Activated naive CD4-positive, alpha-beta T cell treated with anti-CD3 and anti-CD28 coated beads for 36 hours (primary cell): ENCODE measurements at regions of chr14 and their contacts with region 1.

Region 1: GRCh38 chr14:61620130-61620946 is 75.0 kb upstream of the HIF1A start:
- DNase-seq: peak; percentile 85
- H3K4me3 Mint-ChIP-seq: no peak overlapping the region
- H3K27ac Mint-ChIP-seq: peak overlapping the region; percentile 89
- H3K4me1 Mint-ChIP-seq: peaks cover 80% of the 10 kb centered on the region
- H3K27me3 Mint-ChIP-seq: no peaks in the 10 kb centered on the region

Region 2: DNA sequence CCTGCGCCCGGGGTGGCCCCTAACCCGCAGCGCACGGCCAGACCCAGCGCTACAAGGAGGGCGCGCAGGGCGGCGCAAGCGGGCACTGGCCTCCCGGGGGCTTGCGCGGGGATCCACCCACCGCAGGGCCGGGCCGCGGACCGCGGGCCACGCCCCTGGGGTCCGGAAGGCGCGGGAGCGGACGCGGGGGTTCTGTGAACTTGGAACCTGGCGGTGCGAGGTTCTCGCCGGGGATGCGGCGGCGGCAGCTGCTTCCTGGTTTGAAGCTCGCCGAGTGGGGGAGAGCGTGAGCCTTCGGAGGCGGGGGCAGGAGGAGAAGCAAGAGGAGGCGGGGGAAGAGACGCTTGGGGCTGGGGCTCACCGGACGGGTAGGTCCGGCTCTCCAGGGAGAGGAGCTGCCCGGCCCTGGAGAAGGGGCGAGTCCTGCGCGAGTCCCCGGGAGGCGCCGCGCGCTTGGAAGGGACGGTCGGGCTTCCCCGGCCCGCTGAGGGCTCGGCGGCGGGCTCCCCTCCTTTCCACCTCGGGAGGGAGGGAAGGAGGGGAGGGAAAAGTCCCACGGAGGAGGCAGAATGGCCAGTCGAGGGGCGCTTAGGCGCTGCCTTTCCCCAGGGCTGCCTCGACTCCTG is 298.8 kb before region 1 on chr14 and contains the start of gene PRKCH:
- CTCF ChIA-PET with region 1: no interaction called
- intact Hi-C with region 1: loop called (anchors 5 kb)
- DNase-seq: peak; percentile 91
- H3K4me3 Mint-ChIP-seq: peak within 1 kb of the TSS; percentile 99
- H3K27ac Mint-ChIP-seq: peak within 1 kb of the TSS; percentile 95
- H3K4me1 Mint-ChIP-seq: peaks cover 25% of the 10 kb centered on the region
- H3K27me3 Mint-ChIP-seq: no peaks in the 10 kb centered on the region
- total RNA-seq, gene PRKCH: 149 to 158 TPM

Region 3: DNA sequence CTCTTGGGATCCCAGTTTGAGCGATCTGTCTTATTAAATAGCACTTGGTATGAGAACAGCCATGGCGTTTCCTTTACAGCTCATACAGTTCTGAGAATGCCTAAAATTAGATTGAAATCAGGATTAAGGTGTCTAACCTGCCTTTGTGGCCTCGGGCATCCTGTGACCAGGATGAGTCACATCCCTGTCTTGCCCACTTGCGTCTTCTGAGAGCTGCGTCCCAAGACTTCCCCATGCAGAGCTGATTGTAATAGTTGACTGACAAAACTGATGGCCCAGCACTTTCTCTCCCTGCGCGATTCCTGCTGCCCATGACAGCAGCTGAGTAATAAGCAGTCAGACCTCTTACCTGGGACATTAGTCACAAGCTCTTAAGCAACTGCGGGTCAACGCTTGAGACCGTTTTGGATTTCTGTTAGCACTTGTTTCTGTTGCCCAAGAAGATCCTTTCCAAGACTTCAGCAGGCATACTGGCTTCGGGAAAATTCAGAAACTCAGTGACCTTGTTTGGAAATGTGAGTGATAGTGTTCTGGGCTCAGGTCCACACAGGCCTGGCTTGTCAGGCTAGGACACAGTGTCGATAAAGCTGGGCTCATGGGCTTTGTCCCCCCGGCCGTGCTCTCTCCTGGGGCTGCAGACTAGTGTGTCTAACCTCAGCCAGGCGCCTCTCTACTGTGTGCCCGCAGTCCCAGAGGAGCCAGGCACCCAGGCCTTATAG is 94.9 kb before region 1 on chr14:
- CTCF ChIA-PET with region 1: no interaction called
- intact Hi-C with region 1: loop called (anchors 1 kb)
- DNase-seq: peak; percentile 91
- H3K4me3 Mint-ChIP-seq: peak overlapping the region; percentile 22
- H3K27ac Mint-ChIP-seq: peak overlapping the region; percentile 94
- H3K4me1 Mint-ChIP-seq: peaks cover 84% of the 10 kb centered on the region
- H3K27me3 Mint-ChIP-seq: no peaks in the 10 kb centered on the region

Region 4: DNA sequence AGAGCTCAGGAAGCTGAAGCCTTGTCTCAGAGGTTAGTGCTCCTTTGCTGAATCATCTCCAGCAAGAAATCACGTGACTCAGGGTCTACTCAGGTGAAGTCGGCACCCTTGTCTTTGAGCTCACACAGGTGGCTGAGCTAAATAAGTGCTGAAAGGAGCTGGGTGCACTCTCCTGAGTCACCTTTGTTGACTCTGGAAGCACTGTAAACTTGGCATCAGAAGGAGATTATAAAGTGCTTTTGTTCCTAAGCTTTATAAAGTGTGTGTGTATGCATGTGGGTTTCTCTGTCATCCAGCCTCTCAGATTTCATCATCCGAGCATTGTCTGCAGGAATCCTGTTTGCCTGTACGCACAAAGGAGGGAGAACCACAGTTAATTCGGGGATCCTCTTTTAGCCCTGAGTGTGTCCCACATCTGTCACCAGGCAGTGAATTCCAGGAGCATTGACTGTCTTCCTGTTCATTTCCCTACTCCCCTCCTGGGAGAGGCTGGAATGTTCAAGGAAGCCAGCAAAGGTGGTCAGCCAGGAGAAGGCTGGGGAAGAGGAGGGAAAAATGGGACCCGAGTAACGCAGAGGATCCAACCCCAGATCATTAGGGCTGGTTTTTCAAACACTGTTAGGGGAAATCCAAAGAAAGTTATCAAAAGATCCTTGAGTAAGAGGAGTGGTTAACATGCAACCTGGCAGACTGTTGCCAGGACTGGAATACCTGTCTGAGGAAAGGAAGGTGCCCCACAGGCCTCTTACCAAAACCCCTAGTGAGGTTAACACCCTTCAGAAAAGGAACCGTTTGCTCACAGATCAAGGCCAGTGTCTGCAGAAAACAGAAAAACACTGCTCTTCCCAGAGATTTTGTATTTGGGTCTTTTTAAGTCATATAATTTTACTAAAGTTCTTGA is 82.5 kb before region 1 on chr14:
- CTCF ChIA-PET with region 1: interaction called, 3 read pairs
- intact Hi-C with region 1: loop called (anchors 1 kb)
- DNase-seq: peak; percentile 79
- H3K4me3 Mint-ChIP-seq: no peak overlapping the region
- H3K27ac Mint-ChIP-seq: peak overlapping the region; percentile 92
- H3K4me1 Mint-ChIP-seq: peaks cover 84% of the 10 kb centered on the region
- H3K27me3 Mint-ChIP-seq: no peaks in the 10 kb centered on the region

Region 5: GRCh38 chr14:61553725-61554641 is 66.4 kb before region 1 on chr14:
- CTCF ChIA-PET with region 1: no interaction called
- intact Hi-C with region 1: loop called (anchors 1 kb)
- DNase-seq: no peak
- H3K4me3 Mint-ChIP-seq: no peak overlapping the region
- H3K27ac Mint-ChIP-seq: peak overlapping the region; percentile 97
- H3K4me1 Mint-ChIP-seq: peaks cover 66% of the 10 kb centered on the region
- H3K27me3 Mint-ChIP-seq: no peaks in the 10 kb centered on the region

Region 6: DNA sequence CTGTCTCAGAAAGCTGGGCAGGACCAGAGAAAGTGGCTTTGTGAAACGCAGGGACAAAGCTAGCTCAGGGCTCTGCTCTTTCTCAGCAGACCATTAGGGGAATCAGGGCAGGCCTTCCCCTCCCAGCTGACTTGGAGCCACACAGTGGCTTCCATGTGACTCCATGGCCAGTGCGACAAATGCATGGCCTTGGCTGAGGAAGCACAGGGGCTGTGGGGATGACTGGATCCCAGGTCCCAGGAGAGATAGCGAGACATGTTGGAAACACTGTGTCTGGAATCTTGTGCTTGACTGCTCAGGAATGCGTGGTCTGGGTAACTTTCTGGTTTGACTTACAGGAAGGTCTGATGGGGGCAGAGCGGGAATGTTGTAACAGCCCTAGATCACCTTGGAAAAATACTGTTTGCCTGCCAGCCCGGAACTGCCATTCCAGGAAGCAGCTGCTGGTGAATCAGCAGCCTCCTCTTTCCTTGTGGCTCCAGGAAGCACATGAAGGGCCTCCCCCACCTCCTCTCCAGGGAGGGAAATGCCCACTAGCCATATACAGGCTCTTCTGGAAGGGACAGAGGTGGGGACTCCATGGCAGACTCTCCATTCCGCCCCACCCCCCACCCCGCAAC is 58.6 kb before region 1 on chr14:
- CTCF ChIA-PET with region 1: interaction called, 6 read pairs
- intact Hi-C with region 1: loop called (anchors 2 kb)
- DNase-seq: no peak
- H3K4me3 Mint-ChIP-seq: no peak overlapping the region
- H3K27ac Mint-ChIP-seq: peak overlapping the region; percentile 75
- H3K4me1 Mint-ChIP-seq: peaks cover 73% of the 10 kb centered on the region
- H3K27me3 Mint-ChIP-seq: no peaks in the 10 kb centered on the region

Region 7: GRCh38 chr14:61636779-61637178 is 16.4 kb after region 1 on chr14:
- CTCF ChIA-PET with region 1: interaction called, 5 read pairs
- intact Hi-C with region 1: loop called (anchors 1 kb)
- DNase-seq: no peak
- H3K4me3 Mint-ChIP-seq: no peak overlapping the region
- H3K27ac Mint-ChIP-seq: peak overlapping the region; percentile 50
- H3K4me1 Mint-ChIP-seq: peaks cover 30% of the 10 kb centered on the region
- H3K27me3 Mint-ChIP-seq: no peaks in the 10 kb centered on the region